ENCODE measurements at regions of chr21 and their contacts with region 1.

Region 1: DNA sequence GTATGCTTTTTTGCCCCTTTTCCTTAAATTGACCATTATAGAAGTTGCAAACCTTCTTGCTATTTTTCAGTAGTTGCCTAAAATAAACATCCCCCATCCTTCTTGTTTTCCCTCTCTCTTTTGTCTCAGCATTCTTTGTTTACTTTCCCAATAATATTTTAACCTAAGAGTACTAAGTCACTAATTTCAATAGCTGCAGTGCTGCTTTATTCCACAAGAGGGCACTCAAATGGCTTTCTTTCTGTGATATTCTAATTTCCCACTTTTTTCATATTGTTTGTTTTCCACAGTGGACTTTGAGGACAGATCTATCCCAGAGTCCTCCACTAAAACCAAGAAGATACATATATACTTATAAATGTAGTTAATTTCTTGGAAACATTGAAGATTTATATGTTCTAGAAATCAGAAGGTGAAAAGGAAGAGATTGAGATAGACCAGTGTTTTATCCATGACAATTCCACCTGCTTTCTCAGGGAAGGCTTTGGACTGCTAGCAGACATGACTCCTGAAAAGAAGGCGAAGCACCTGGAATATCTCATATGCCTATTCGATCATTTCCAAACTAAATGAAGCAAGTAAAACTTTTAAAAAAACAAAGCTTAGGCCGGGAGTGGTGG is 104.8 kb upstream of the GRIK1 start:
- DNase-seq: peak; percentile 9
- H3K4me3 ChIP-seq: no peak overlapping the region
- H3K27ac ChIP-seq: no peak overlapping the region
- H3K4me1 ChIP-seq: no peaks in the 10 kb centered on the region
- H3K27me3 ChIP-seq: no peaks in the 10 kb centered on the region
- CTCF ChIP-seq: peak; percentile 82 to 94

Region 2: GRCh38 chr21:30072496-30072895 is 27.9 kb after region 1 on chr21:
- CTCF ChIA-PET with region 1: no interaction called
- dilution Hi-C with region 1: no loop called
- in situ Hi-C with region 1: no loop called
- intact Hi-C with region 1: loop called (anchors 1 kb)
- DNase-seq: peak; percentile 66
- H3K4me3 ChIP-seq: no peak overlapping the region
- H3K27ac ChIP-seq: no peak overlapping the region
- H3K4me1 ChIP-seq: no peaks in the 10 kb centered on the region
- H3K27me3 ChIP-seq: no peaks in the 10 kb centered on the region
- CTCF ChIP-seq: peak; percentile 67 to 78

Region 3: GRCh38 chr21:30126576-30126975 is 82.0 kb after region 1 on chr21:
- CTCF ChIA-PET with region 1: no interaction called
- dilution Hi-C with region 1: loop called (anchors 5 kb)
- in situ Hi-C with region 1: no loop called
- intact Hi-C with region 1: no loop called
- DNase-seq: peak; percentile 85
- H3K4me3 ChIP-seq: no peak overlapping the region
- H3K27ac ChIP-seq: peak overlapping the region; percentile 15
- H3K4me1 ChIP-seq: peaks cover 17% of the 10 kb centered on the region
- H3K27me3 ChIP-seq: no peaks in the 10 kb centered on the region
- CTCF ChIP-seq: peak in 1 of 2 donors; percentile 24

Region 4: GRCh38 chr21:30257773-30258172 is 213.2 kb after region 1 on chr21:
- CTCF ChIA-PET with region 1: no interaction called
- dilution Hi-C with region 1: loop called (anchors 25 kb)
- in situ Hi-C with region 1: no loop called
- intact Hi-C with region 1: loop called (anchors 1 kb)
- DNase-seq: peak; percentile 66
- H3K4me3 ChIP-seq: no peak overlapping the region
- H3K27ac ChIP-seq: no peak overlapping the region
- H3K4me1 ChIP-seq: no peaks in the 10 kb centered on the region
- H3K27me3 ChIP-seq: no peaks in the 10 kb centered on the region
- CTCF ChIP-seq: peak; percentile 55 to 64

Region 5: DNA sequence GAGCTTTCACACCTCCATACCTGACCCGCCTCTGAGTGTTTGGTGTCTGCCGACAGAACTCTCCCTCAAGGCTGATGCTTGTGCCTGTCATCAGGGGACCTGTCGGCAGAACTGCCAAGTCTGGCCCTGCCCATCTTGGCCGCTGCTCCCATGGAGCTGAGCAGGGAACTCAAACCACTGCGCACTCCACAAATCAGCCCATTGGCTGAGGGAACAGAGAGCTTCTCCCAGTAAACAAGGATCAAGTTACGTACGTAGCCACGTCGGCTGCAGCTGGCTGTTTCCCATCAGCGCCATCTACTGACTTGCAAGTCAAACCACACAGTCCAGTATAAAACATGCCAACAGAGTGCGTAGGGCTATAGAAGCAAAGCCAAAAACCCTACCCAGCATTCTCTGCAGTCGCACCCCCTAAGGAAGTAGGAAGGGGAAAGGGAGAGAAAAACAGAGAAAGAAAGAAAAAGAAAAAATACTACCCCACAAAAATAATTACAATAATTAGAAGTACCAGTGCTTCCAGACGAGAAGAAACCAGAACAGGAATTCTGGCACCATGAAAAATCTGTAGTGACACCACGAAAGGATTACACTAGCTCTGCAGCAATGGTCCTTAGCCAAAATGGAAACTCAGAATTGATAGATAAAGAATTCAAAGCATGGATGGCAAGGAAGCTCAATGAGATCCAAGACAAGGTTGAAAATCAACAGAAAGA is 364.4 kb after region 1 on chr21:
- CTCF ChIA-PET with region 1: no interaction called
- dilution Hi-C with region 1: no loop called
- in situ Hi-C with region 1: no loop called
- intact Hi-C with region 1: loop called (anchors 10 kb)
- DNase-seq: peak; percentile 83
- H3K4me3 ChIP-seq: peak overlapping the region in 1 of 3 experiments; percentile 27
- H3K27ac ChIP-seq: no peak overlapping the region
- H3K4me1 ChIP-seq: no peaks in the 10 kb centered on the region
- H3K27me3 ChIP-seq: no peaks in the 10 kb centered on the region
- CTCF ChIP-seq: peak; percentile 82 to 87

Measured in mammary epithelial cell (primary cell).